ENCODE measurements at regions of chr2 and their contacts with region 1.

Region 1: GRCh38 chr2:67792681-67793091 is 270.1 kb downstream of the C1D start:
- DNase-seq: no peak
- H3K4me3 ChIP-seq: no peak overlapping the region
- H3K27ac ChIP-seq: no peak overlapping the region
- H3K4me1 ChIP-seq: peaks cover 6% of the 10 kb centered on the region
- H3K27me3 ChIP-seq: no peaks in the 10 kb centered on the region
- CTCF ChIP-seq: no peak
- POLR2A ChIP-seq: no peak

Region 2: DNA sequence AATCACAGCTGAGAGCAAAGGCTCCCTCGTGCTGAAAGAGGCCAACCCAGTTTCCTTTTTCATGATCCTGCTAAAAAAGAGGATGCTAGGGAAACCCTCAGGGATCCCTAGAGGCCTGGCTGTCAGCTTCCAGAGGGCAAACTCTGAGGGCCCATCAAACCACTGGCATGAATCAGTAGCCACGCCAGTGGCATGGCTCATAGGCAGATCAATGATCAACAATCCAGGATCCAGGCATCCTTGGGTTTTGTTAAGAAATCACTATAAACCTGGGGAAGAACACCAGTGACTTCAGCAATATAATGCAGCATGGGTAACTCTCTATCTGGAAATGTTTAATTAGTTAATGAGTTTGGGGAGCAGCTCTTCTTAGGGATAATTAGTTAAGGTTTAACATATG is 16.4 kb before region 1 on chr2:
- CTCF ChIA-PET with region 1: interaction called, 4 read pairs
- POLR2A ChIA-PET with region 1: no interaction called
- dilution Hi-C with region 1: no loop called
- intact Hi-C with region 1: loop called (anchors 2 kb)
- DNase-seq: no peak
- H3K4me3 ChIP-seq: no peak overlapping the region
- H3K27ac ChIP-seq: no peak overlapping the region
- H3K4me1 ChIP-seq: no peaks in the 10 kb centered on the region
- H3K27me3 ChIP-seq: no peaks in the 10 kb centered on the region
- CTCF ChIP-seq: no peak
- POLR2A ChIP-seq: no peak

Region 3: GRCh38 chr2:67954093-67954748 is 161.5 kb after region 1 on chr2:
- CTCF ChIA-PET with region 1: no interaction called
- POLR2A ChIA-PET with region 1: no interaction called
- dilution Hi-C with region 1: no loop called
- intact Hi-C with region 1: no loop called
- DNase-seq: peak; percentile 79
- H3K4me3 ChIP-seq: no peak overlapping the region
- H3K27ac ChIP-seq: no peak overlapping the region
- H3K4me1 ChIP-seq: peaks cover 10% of the 10 kb centered on the region
- H3K27me3 ChIP-seq: no peaks in the 10 kb centered on the region
- CTCF ChIP-seq: no peak
- POLR2A ChIP-seq: no peak

Region 4: GRCh38 chr2:68715353-68716041 is 922.8 kb after region 1 on chr2:
- CTCF ChIA-PET with region 1: no interaction called
- POLR2A ChIA-PET with region 1: no interaction called
- dilution Hi-C with region 1: no loop called
- intact Hi-C with region 1: no loop called
- DNase-seq: peak; percentile 54
- H3K4me3 ChIP-seq: no peak overlapping the region
- H3K27ac ChIP-seq: no peak overlapping the region
- H3K4me1 ChIP-seq: no peaks in the 10 kb centered on the region
- H3K27me3 ChIP-seq: peaks cover 16 to 27% of the 10 kb centered on the region in 2 experiments
- CTCF ChIP-seq: peak; percentile 73 to 83
- POLR2A ChIP-seq: no peak